ENCODE measurements at regions of chr12 and their contacts with region 1.

Region 1: GRCh38 chr12:74689071-74689655 is 151.5 kb downstream of the ATXN7L3B start:
- DNase-seq: peak in 4 of 5 donors; percentile 23 to 44 (median 39)
- H3K4me3 ChIP-seq: no peak overlapping the region
- H3K4me3 Mint-ChIP-seq: no peak overlapping the region
- H3K27ac ChIP-seq: no peak overlapping the region
- H3K27ac Mint-ChIP-seq: no peak overlapping the region
- H3K4me1 ChIP-seq: no peaks in the 10 kb centered on the region
- H3K4me1 Mint-ChIP-seq: no peaks in the 10 kb centered on the region
- H3K27me3 ChIP-seq: no peaks in the 10 kb centered on the region
- H3K27me3 Mint-ChIP-seq: peaks cover 0 to 2% of the 10 kb centered on the region in 2 donors

Region 2: DNA sequence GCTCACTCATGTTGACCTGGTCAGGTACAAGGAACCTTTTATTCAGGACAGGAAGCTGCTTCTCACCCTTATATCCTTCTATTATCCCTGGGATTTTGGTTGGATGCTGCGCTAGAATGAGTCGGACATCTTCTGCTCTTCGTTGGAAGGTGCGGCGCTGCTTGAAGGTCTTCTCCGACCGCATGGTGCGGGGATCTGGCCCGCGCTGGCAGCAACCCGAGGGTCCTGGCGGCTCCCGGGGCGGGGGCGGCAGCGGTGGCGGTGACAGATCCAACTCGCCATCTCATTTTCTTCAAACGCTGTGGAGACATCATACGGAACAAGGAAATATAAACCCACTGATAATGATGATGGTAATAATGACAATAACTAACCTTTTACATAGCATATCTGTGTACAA is 25.2 kb before region 1 on chr12:
- CTCF ChIA-PET with region 1: no interaction called
- POLR2A ChIA-PET with region 1: no interaction called
- intact Hi-C with region 1: no loop called
- DNase-seq: no peak
- H3K4me3 ChIP-seq: no peak overlapping the region
- H3K4me3 Mint-ChIP-seq: no peak overlapping the region
- H3K27ac ChIP-seq: no peak overlapping the region
- H3K27ac Mint-ChIP-seq: no peak overlapping the region
- H3K4me1 ChIP-seq: no peaks in the 10 kb centered on the region
- H3K4me1 Mint-ChIP-seq: no peaks in the 10 kb centered on the region
- H3K27me3 ChIP-seq: no peaks in the 10 kb centered on the region
- H3K27me3 Mint-ChIP-seq: peaks cover 0 to 2% of the 10 kb centered on the region in 2 donors

Region 3: DNA sequence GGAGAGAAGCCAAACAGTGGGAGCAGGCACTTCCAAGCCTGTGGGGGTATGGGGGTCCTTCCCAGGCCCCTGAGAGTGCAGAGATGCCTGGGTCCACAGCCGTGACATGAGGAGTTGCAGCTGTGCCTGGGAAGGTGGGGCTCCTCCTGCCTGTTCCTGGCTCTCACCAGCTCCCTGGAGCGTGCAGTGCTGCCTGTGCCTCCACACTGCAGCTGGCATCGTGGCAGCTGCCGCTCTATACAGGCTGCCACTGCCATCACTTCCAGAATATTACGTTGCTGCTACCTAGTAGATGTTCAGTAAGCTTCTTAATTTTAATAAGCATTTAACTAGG is 296.8 kb after region 1 on chr12:
- CTCF ChIA-PET with region 1: no interaction called
- POLR2A ChIA-PET with region 1: no interaction called
- intact Hi-C with region 1: no loop called
- DNase-seq: no peak
- H3K4me3 ChIP-seq: no peak overlapping the region
- H3K4me3 Mint-ChIP-seq: no peak overlapping the region
- H3K27ac ChIP-seq: no peak overlapping the region
- H3K27ac Mint-ChIP-seq: no peak overlapping the region
- H3K4me1 ChIP-seq: no peaks in the 10 kb centered on the region
- H3K4me1 Mint-ChIP-seq: peaks cover 0 to 6% (median 2%) of the 10 kb centered on the region in 4 donors
- H3K27me3 ChIP-seq: no peaks in the 10 kb centered on the region
- H3K27me3 Mint-ChIP-seq: no peaks in the 10 kb centered on the region

Region 4: GRCh38 chr12:75058228-75058627 is 369.1 kb after region 1 on chr12:
- CTCF ChIA-PET with region 1: interaction called, 5 read pairs
- POLR2A ChIA-PET with region 1: no interaction called
- intact Hi-C with region 1: loop called (anchors 1 kb)
- DNase-seq: no peak
- H3K4me3 ChIP-seq: no peak overlapping the region
- H3K4me3 Mint-ChIP-seq: no peak overlapping the region
- H3K27ac ChIP-seq: no peak overlapping the region
- H3K27ac Mint-ChIP-seq: no peak overlapping the region
- H3K4me1 ChIP-seq: no peaks in the 10 kb centered on the region
- H3K4me1 Mint-ChIP-seq: no peaks in the 10 kb centered on the region
- H3K27me3 ChIP-seq: no peaks in the 10 kb centered on the region
- H3K27me3 Mint-ChIP-seq: no peaks in the 10 kb centered on the region

Region 5: GRCh38 chr12:75289753-75290152 is 600.6 kb after region 1 on chr12:
- CTCF ChIA-PET with region 1: no interaction called
- POLR2A ChIA-PET with region 1: no interaction called
- intact Hi-C with region 1: loop called (anchors 1 kb)
- DNase-seq: peak in 1 of 5 donors; percentile 6
- H3K4me3 ChIP-seq: no peak overlapping the region
- H3K4me3 Mint-ChIP-seq: no peak overlapping the region
- H3K27ac ChIP-seq: no peak overlapping the region
- H3K27ac Mint-ChIP-seq: no peak overlapping the region
- H3K4me1 ChIP-seq: no peaks in the 10 kb centered on the region
- H3K4me1 Mint-ChIP-seq: peaks cover 0 to 5% (median under 1%) of the 10 kb centered on the region in 4 donors
- H3K27me3 ChIP-seq: no peaks in the 10 kb centered on the region
- H3K27me3 Mint-ChIP-seq: no peaks in the 10 kb centered on the region